Activated CD4-positive, alpha-beta T cell treated with anti-CD3 and anti-CD28 coated beads, Interleukin-2, amount 10 ng/mL, durations not matched to agents 7 days and 5 days (primary cell): ENCODE measurements at regions of chr1 and their contacts with region 1.

Region 1: GRCh38 chr1:37931361-37932158 is 15.3 kb downstream of the INPP5B start:
- DNase-seq: peak; percentile 98
- H3K4me3 Mint-ChIP-seq: peak overlapping the region; percentile 95
- H3K27ac Mint-ChIP-seq: peak overlapping the region; percentile 76
- H3K4me1 Mint-ChIP-seq: peaks cover 41% of the 10 kb centered on the region
- H3K27me3 Mint-ChIP-seq: no peaks in the 10 kb centered on the region

Region 2: GRCh38 chr1:37752583-37753471 is 178.7 kb before region 1 on chr1:
- CTCF ChIA-PET with region 1: no interaction called
- POLR2A ChIA-PET with region 1: no interaction called
- DNase-seq: no peak
- H3K4me3 Mint-ChIP-seq: peak overlapping the region; percentile 50
- H3K27ac Mint-ChIP-seq: no peak overlapping the region
- H3K4me1 Mint-ChIP-seq: peaks cover 9% of the 10 kb centered on the region
- H3K27me3 Mint-ChIP-seq: peaks cover 56% of the 10 kb centered on the region

Region 3: DNA sequence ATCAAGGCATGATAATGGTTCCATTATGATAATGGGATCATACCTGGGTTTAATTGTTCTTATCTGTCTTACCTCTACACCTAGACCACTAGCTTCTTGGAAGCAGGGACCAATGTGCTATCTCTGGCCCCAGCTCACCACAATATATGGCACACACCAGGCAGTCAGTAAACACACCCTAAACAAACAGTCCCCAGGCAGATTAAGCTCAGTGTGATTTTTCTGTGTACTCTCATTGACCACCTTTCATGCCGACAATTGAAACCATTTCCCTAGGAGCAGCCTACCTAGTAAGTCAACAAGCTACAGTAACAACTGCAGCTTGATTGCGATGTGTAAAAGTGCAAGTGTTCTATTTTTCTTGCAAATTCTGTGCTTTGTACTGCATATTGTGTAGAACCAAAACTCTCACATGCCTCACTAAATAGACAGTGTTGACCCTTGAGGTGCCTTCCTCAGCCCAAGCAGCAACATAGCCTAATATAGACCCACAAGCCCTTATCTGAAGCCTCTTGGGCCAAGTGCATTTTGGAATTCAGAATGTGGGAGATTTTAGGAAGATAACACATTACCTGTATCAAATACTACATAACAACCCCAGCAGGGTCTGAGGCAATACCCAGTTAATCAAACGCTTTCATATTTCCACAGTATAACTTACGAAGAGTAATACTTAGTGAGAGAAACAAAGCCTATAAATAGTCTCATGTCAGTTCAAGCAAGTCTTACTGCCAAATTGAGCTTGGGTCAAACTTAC is 16.7 kb before region 1 on chr1:
- CTCF ChIA-PET with region 1: no interaction called
- POLR2A ChIA-PET with region 1: no interaction called
- DNase-seq: no peak
- H3K4me3 Mint-ChIP-seq: no peak overlapping the region
- H3K27ac Mint-ChIP-seq: no peak overlapping the region
- H3K4me1 Mint-ChIP-seq: peaks cover 2% of the 10 kb centered on the region
- H3K27me3 Mint-ChIP-seq: no peaks in the 10 kb centered on the region

Region 4: GRCh38 chr1:37958690-37959089 is 27.1 kb after region 1 on chr1:
- CTCF ChIA-PET with region 1: interaction called, 5 read pairs
- POLR2A ChIA-PET with region 1: interaction called, 11 read pairs
- DNase-seq: no peak
- H3K4me3 Mint-ChIP-seq: no peak overlapping the region
- H3K27ac Mint-ChIP-seq: no peak overlapping the region
- H3K4me1 Mint-ChIP-seq: no peaks in the 10 kb centered on the region
- H3K27me3 Mint-ChIP-seq: no peaks in the 10 kb centered on the region